Dorsolateral prefrontal cortex (tissue), 120 donors: ENCODE measurements at regions of chr7 and their contacts with region 1.

Region 1: GRCh38 chr7:77247206-77247850 is 47.7 kb upstream of the FGL2 start:
- DNase-seq: peak in 9 of 10 donors; percentile 14 to 78 (median 58)
- H3K4me3 ChIP-seq: no peak overlapping the region
- H3K27ac ChIP-seq: no peak overlapping the region
- H3K27me3 ChIP-seq: no peaks in the 10 kb centered on the region
- CTCF ChIP-seq: peak; percentile 57 to 88 (median 77)

Region 2: GRCh38 chr7:77258014-77258413 is 10.7 kb after region 1 on chr7:
- intact Hi-C with region 1: no loop called
- DNase-seq: no peak
- H3K4me3 ChIP-seq: no peak overlapping the region
- H3K27ac ChIP-seq: no peak overlapping the region
- H3K27me3 ChIP-seq: no peaks in the 10 kb centered on the region
- CTCF ChIP-seq: no peak

Region 3: GRCh38 chr7:77331938-77332695 is 84.8 kb after region 1 on chr7:
- intact Hi-C with region 1: loop called in 1 of 2 experiments (anchors 5 kb)
- DNase-seq: peak in 7 of 10 donors; percentile 30 to 57 (median 48)
- H3K4me3 ChIP-seq: no peak overlapping the region
- H3K27ac ChIP-seq: no peak overlapping the region
- H3K27me3 ChIP-seq: no peaks in the 10 kb centered on the region
- CTCF ChIP-seq: peak; percentile 43 to 87 (median 69)